Activated T-helper 2 cell treated with anti-CD3 and anti-CD28 coated beads, Interferon-gamma antibody, Interleukin-2, Interleukin-4, amounts not matched to agents 10 μg/mL and 5 μg/mL and 100 μg/mL, durations not matched to agents 14 hours and 24 hours and 36 hours (primary cell): ENCODE measurements at regions of chr16 and their contacts with region 1.

Region 1: DNA sequence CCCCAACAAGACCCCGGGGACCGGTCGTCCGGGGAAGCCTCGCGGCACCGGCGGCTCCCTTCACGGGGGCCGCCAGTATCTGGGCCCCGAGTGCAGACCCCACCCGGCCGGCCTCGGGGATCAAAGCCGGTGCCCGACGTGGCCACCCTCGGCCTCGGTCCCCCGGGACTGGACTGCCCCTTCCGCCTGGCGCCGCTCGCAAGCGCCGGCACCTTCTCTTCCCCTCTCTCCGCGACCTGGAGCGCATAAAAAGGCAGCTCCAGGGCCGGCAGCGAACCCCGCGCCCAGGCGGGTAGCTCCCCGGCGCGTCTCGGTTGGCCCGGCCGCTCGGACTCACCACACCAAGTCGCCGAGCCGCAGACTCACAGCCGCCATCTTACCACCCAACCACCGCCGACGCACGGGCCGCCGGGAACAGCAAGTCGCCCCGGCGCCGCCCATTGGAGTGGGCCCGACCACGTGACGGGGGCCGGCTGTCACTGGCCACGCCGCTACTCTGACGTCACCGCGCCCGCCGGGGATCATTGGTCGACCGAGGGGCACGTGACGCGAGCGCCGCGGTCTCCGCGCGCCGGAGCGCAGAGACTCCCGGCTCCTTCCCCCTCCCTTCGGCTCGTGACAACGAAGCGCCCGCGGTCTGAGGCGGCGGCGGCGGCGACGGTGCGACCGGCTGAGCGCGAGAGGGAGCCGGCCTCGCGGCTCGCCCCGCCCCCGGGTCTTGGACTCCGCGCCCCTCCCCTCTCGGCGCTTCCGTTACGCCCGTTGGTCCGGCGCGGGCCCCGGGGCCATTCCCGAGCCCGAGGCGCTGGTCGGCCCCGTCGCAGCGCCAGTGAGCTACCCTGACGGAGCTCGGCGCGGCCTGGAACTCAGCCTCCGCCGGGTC is at the starts of genes GLYR1 and UBN1:
- DNase-seq: peak; percentile 99
- H3K4me3 Mint-ChIP-seq: peak within 1 kb of the TSS; percentile 87
- H3K27ac Mint-ChIP-seq: peak within 1 kb of the TSS; percentile 80
- H3K4me1 Mint-ChIP-seq: peaks cover 49% of the 10 kb centered on the region
- H3K27me3 Mint-ChIP-seq: no peaks in the 10 kb centered on the region
- total RNA-seq, gene GLYR1: 104 and 112 TPM in 2 replicates
- total RNA-seq, gene UBN1: 33.8 and 34.2 TPM in 2 replicates

Region 2: DNA sequence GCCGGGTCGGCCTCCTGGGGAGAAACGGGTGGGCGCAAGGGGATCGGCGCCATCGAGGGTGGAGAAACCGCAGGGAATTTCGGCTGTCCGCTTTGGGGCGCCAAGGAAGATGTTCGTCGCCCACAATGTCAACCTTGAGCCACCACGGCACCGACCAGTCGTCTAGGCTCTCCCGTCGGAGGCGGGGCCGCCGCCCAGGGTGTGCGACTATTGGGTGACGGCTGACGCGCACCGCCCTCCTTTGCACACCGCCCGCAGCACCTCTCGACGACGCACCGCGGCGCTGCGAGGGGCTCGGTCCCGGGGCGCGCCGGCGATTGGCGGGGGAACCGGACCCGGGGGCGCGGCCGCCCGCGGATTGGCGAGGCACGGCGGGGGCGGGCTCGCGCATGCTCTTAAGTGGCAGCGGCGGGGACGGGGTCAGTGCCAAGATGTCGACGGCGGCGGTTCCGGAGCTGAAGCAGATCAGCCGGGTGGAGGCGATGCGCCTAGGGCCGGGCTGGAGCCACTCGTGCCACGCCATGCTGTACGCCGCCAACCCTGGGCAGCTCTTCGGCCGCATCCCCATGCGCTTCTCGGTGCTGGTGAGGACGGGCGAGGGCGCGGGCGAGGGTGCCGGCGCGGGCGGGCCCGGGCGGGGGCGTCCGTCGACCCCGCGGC is 153.7 kb before region 1 on chr16 and contains the start of gene NUDT16L1:
- intact Hi-C with region 1: loop called (anchors 1 kb)
- DNase-seq: peak; percentile 97
- H3K4me3 Mint-ChIP-seq: peak within 1 kb of the TSS; percentile 84
- H3K27ac Mint-ChIP-seq: peak within 1 kb of the TSS; percentile 79
- H3K4me1 Mint-ChIP-seq: peaks cover 10% of the 10 kb centered on the region
- H3K27me3 Mint-ChIP-seq: no peaks in the 10 kb centered on the region
- total RNA-seq, gene NUDT16L1: 34.1 and 35.5 TPM in 2 replicates

Region 3: GRCh38 chr16:4734063-4734729 is 112.9 kb before region 1 on chr16 and contains the starts of genes ANKS3 and DNAAF8:
- intact Hi-C with region 1: loop called (anchors 1 kb)
- DNase-seq: peak; percentile 76
- H3K4me3 Mint-ChIP-seq: peak within 1 kb of the TSS; percentile 85
- H3K27ac Mint-ChIP-seq: peak within 1 kb of the TSS; percentile 69
- H3K4me1 Mint-ChIP-seq: peaks cover 12% of the 10 kb centered on the region
- H3K27me3 Mint-ChIP-seq: no peaks in the 10 kb centered on the region
- total RNA-seq, gene ANKS3: 18.6 and 20.6 TPM in 2 replicates
- total RNA-seq, gene DNAAF8: 0.11 TPM in 1 of 2 replicates, not detected in the other

Region 4: DNA sequence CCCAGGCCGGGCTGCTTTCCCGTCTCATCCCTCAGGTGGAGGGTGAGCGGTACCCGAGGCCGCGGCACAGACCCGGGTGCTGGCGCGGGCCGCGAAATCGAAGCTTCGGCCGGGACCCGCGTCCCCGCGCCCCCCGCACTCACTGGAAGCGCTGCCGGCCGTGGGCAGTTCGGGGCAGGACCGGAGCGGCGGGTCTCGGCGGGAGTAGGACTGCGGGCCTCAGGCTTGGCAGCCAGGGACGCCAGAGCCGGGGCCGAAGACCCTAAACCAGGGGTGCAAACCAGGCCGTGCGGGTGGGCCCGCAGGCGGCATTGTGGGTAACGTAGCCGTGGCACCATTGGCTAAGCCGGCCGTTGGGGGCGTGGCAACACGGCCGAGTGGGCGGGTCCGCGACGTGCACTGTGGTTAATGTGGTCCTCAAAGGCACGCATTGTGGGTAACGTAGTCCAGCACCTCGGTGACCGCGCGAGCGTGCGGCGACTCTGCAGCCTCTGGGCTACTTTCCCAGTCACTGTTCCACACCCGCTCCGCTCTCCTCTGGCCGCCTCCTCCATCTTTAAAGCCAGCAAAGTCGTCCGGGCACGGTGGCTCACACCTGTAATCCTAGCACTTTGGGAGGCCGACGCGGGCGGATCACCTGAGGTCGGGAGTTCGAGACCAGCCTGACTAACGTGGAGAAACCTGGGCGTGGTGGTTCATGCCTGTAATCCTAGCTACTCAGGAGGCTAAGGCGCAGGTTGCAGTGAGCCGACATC is 80.1 kb before region 1 on chr16 and contains the start of gene ZNF500:
- intact Hi-C with region 1: loop called (anchors 1 kb)
- DNase-seq: peak; percentile 95
- H3K4me3 Mint-ChIP-seq: peak within 1 kb of the TSS; percentile 88
- H3K27ac Mint-ChIP-seq: peak within 1 kb of the TSS; percentile 84
- H3K4me1 Mint-ChIP-seq: peaks cover 13% of the 10 kb centered on the region
- H3K27me3 Mint-ChIP-seq: no peaks in the 10 kb centered on the region
- total RNA-seq, gene ZNF500: 16.6 and 18.1 TPM in 2 replicates

Region 5: DNA sequence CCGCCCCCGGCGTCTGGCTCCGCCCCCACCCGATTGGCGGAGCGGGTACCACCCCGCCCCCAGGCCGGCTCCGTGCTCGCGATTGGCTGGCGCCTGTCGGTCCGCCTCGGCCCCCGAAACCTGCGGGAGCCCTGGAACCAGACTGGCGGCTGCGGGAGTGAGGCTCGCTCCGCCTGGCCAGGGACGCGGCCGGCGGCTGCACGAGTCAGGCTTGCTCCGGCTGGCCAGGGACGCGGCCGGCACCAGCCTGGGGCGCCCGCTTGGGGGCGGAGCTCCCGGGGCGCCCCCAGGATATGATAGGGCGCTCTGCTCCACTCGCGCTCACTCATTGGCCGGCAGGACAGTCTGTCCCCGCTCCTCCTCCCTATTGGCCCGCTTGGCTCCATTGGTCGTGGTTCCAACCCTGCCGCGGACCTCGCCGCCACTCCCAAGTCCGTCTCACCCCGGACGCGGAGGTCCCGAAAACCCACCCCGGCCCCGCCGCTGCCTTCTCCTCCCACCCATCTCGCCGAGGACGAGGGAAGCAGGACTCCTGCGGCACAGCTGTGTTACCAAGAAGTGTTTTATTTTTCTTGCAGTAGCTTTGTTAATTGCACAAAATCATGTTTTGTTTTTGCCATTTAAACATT is 44.4 kb before region 1 on chr16:
- intact Hi-C with region 1: loop called (anchors 2 kb)
- DNase-seq: peak; percentile 88
- H3K4me3 Mint-ChIP-seq: peak overlapping the region; percentile 81
- H3K27ac Mint-ChIP-seq: peak overlapping the region; percentile 38
- H3K4me1 Mint-ChIP-seq: peaks cover 5% of the 10 kb centered on the region
- H3K27me3 Mint-ChIP-seq: no peaks in the 10 kb centered on the region

Region 6: DNA sequence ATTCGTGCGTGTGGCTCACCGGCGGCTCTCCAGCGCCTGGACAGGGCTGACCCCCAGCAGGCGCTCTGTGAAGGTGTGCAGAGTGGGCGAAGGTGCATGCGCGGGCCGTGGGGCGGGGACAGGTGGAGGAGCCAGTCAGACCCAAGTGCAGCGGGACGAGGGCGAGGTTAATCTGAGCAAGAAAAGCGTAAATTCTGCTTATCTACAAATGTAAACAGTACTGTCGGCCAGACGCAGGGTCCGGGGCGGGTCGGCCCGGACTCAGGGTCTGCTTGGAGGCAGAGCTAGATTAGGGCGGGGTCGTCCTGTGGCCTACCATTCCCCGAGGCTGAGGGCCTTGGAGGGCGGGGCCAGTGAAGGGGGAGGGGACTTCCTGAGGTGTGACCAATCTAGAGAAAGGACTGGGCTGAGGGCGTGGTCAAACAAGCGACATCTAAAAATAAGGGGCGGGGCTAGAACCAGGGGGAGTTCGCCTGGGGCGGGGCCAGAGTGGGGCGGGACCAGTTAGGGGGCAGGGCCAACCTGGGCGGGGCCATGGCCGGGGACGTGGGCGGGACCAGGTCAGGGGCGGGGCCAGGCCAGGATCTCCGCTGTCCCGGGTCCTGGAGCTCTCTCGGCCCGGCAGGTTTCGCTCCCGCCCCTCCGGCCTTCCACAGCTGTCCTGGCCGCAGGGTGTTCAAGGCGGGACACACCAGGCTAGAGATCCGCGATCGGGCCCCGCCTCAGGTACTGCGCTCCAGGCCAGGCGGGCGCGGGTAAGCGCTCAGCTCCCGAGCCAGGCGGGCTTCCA is 110.8 kb after region 1 on chr16 and contains the start of gene SEC14L5:
- intact Hi-C with region 1: loop called (anchors 5 kb)
- DNase-seq: peak; percentile 89
- H3K4me3 Mint-ChIP-seq: peak within 1 kb of the TSS; percentile 82
- H3K27ac Mint-ChIP-seq: no peak within 1 kb of the TSS
- H3K4me1 Mint-ChIP-seq: peaks cover 13% of the 10 kb centered on the region
- H3K27me3 Mint-ChIP-seq: peaks cover 13% of the 10 kb centered on the region
- total RNA-seq, gene SEC14L5: not detected in 2 replicates